ENCODE measurements at regions of chr1 and their contacts with region 1.

Region 1: GRCh38 chr1:4367230-4367777 is 287.1 kb upstream of the AJAP1 start:
- DNase-seq: no peak
- H3K4me3 ChIP-seq: no peak overlapping the region
- H3K27ac ChIP-seq: no peak overlapping the region
- H3K4me1 ChIP-seq: no peaks in the 10 kb centered on the region
- H3K27me3 ChIP-seq: no peaks in the 10 kb centered on the region
- CTCF ChIP-seq: no peak
- EP300 ChIP-seq: no peak
- POLR2A ChIP-seq: no peak

Region 2: GRCh38 chr1:4203501-4203900 is 163.8 kb before region 1 on chr1:
- intact Hi-C with region 1: no loop called
- DNase-seq: no peak
- H3K4me3 ChIP-seq: no peak overlapping the region
- H3K27ac ChIP-seq: no peak overlapping the region
- H3K4me1 ChIP-seq: no peaks in the 10 kb centered on the region
- H3K27me3 ChIP-seq: no peaks in the 10 kb centered on the region
- CTCF ChIP-seq: no peak
- EP300 ChIP-seq: no peak
- POLR2A ChIP-seq: no peak

Region 3: DNA sequence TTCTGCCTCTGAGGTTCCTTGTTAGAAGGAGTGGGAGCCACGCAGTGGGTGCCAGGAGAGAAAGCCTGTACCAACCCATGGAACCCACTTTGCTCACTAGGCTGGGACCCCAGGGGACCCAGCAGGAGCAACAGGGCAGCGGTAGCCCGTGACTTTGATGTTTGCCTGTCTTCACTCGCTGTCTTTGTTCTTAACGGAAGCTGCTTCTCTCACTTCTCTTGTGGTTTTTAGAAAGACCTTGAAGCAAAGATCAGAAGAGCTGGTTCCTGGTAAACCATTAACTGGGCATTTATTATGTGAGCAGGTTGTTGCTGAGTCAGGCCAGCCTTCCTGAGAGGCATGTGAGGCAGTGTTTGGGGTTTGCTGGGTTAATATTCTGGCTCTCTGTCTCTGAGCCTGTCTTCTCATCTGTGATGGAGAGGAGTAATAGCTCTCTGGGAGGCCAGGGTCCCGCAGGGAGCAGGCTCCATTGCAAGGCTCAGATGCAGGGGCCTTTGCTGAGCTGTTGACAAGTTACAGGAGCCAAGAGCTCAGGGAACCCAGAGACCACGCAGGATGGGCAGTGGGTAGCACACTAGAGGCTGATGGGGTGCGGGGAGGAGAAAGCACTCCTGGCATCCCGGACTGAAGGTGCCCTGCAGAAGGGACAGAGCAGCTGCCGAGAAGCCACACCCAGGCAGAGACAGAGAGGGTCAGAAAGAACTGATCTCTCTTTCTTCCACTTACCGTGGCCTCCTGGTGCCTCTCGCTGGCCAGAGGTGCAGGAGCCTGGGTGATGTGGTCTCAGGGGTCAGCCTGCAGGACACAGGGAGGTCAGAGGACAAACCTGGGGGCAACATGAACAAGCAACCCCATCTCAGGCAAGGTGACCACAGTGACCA is 99.7 kb before region 1 on chr1:
- intact Hi-C with region 1: loop called in 1 of 4 experiments (anchors 5 kb)
- DNase-seq: no peak
- H3K4me3 ChIP-seq: no peak overlapping the region
- H3K27ac ChIP-seq: no peak overlapping the region
- H3K4me1 ChIP-seq: no peaks in the 10 kb centered on the region
- H3K27me3 ChIP-seq: no peaks in the 10 kb centered on the region
- CTCF ChIP-seq: no peak
- EP300 ChIP-seq: no peak
- POLR2A ChIP-seq: no peak

Measured in ovary (tissue), 10 donors.